PC-3 (cell line): ENCODE measurements at regions of chr11 and their contacts with region 1.

Region 1: GRCh38 chr11:96149743-96150555 is 193.0 kb downstream of the MAML2 start:
- DNase-seq: peak; percentile 77
- ATAC-seq: peak; percentile 47
- H3K4me3 ChIP-seq: no peak overlapping the region
- H3K27ac ChIP-seq: peak overlapping the region; percentile 88
- H3K4me1 ChIP-seq: peaks cover 52% of the 10 kb centered on the region
- H3K27me3 ChIP-seq: no peaks in the 10 kb centered on the region
- CTCF ChIP-seq: no peak

Region 2: GRCh38 chr11:95917193-95918036 is 232.5 kb before region 1 on chr11:
- CTCF ChIA-PET with region 1: no interaction called
- POLR2A ChIA-PET with region 1: no interaction called
- intact Hi-C with region 1: no loop called
- DNase-seq: peak; percentile 88
- ATAC-seq: peak; percentile 50
- H3K4me3 ChIP-seq: no peak overlapping the region
- H3K27ac ChIP-seq: peak overlapping the region; percentile 15
- H3K4me1 ChIP-seq: peaks cover 45% of the 10 kb centered on the region
- H3K27me3 ChIP-seq: no peaks in the 10 kb centered on the region
- CTCF ChIP-seq: no peak

Region 3: DNA sequence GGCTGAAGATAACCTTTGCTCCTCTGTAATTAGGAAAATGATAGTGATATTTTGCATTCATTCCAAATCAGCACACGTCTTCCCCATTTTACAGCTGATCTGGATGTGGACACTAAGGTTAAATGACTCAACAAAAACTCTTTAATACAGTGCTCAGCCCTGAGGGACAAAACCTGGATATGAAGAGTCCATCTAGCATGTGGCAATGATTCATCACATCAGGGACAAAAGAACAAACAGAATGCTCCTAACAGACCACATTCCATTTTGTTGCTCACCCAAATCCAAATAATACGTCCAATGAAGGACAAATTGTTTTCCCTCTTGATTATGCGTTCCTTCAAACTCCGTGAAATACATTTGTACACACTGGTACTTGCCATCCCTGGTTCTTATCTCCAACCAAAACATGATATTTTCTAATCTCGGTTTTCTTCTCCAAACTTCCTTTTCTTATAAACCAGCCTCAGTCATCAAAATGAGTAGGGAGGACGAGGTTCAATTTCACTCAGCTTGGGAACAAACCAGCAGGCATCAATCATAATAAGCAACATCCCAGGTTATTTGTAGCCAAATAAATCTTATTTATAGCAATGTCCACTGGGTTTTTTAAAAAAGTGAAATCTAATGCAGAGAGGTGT is 172.3 kb before region 1 on chr11:
- CTCF ChIA-PET with region 1: no interaction called
- POLR2A ChIA-PET with region 1: no interaction called
- intact Hi-C with region 1: no loop called
- DNase-seq: peak; percentile 98
- ATAC-seq: peak; percentile 97
- H3K4me3 ChIP-seq: peak overlapping the region; percentile 17; the same call in 1 of the 2 replicates
- H3K27ac ChIP-seq: peak overlapping the region; percentile 76
- H3K4me1 ChIP-seq: peaks cover 27% of the 10 kb centered on the region
- H3K27me3 ChIP-seq: no peaks in the 10 kb centered on the region
- CTCF ChIP-seq: no peak

Region 4: GRCh38 chr11:96098514-96099241 is 51.3 kb before region 1 on chr11:
- CTCF ChIA-PET with region 1: no interaction called
- POLR2A ChIA-PET with region 1: no interaction called
- intact Hi-C with region 1: loop called (anchors 5 kb)
- DNase-seq: peak; percentile 80
- ATAC-seq: peak; percentile 6
- H3K4me3 ChIP-seq: peak overlapping the region; percentile 11; the same call in 1 of the 2 replicates
- H3K27ac ChIP-seq: peak overlapping the region; percentile 86
- H3K4me1 ChIP-seq: peaks cover 65% of the 10 kb centered on the region
- H3K27me3 ChIP-seq: no peaks in the 10 kb centered on the region
- CTCF ChIP-seq: no peak

Region 5: GRCh38 chr11:96122601-96123074 is 27.3 kb before region 1 on chr11:
- CTCF ChIA-PET with region 1: no interaction called
- POLR2A ChIA-PET with region 1: no interaction called
- intact Hi-C with region 1: no loop called
- DNase-seq: peak; percentile 35
- ATAC-seq: peak; percentile 38; the same call in 1 of the 2 replicates
- H3K4me3 ChIP-seq: no peak overlapping the region
- H3K27ac ChIP-seq: no peak overlapping the region
- H3K4me1 ChIP-seq: no peaks in the 10 kb centered on the region
- H3K27me3 ChIP-seq: no peaks in the 10 kb centered on the region
- CTCF ChIP-seq: no peak

Region 6: GRCh38 chr11:96424693-96425092 is 274.7 kb after region 1 on chr11:
- CTCF ChIA-PET with region 1: no interaction called
- POLR2A ChIA-PET with region 1: no interaction called
- intact Hi-C with region 1: no loop called
- DNase-seq: peak; percentile 61
- ATAC-seq: no peak
- H3K4me3 ChIP-seq: no peak overlapping the region
- H3K27ac ChIP-seq: no peak overlapping the region
- H3K4me1 ChIP-seq: 0 out of 2 replicates have a peak, but pooled peaks cover 7% of the 10 kb centered on the region
- H3K27me3 ChIP-seq: peaks cover 18% of the 10 kb centered on the region
- CTCF ChIP-seq: no peak